ENCODE measurements at regions of chr1 and their contacts with region 1.

Region 1: DNA sequence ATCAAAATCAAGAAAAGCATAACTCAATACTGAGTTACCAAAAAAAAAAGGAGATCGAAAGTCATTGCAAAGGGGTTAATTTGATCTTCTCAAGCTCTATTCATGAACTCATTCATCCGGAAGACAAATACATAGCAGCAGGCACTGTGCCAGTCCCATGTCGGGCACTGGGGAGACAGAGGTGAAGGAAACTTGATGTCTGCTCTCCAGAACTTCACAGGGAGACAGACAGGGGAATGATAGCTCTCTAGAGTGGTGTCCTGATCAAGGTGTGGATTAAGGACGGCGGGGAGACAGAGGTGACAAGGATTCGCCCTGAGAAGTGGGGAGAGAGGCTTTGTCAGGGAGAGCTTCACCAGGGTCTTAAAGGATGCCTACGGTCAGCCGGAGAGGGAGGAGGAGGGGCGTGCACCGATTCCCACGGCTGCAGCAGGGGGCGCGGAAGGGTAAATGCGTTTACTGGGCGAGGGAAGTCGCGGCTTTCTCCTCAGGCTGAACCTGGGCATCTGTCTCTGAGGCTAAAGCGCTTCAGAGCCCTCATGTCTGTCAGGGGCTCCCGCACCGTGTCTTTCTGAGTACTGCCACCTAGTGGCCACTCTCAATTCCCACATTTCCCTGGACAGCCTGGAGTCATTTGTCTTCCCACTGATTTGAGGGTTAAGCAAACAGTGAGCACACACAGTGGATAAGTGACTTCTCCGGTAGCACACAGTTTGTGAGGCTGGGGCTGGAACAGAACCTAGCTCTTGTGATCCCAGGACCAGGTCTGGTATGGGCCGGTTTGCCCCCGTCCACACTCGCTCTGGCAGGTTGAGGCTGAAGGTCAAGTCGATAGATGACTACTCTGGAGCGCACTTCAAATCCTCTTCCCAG is 152.8 kb downstream of the TENT5C start:
- DNase-seq: peak; percentile 88

Region 2: DNA sequence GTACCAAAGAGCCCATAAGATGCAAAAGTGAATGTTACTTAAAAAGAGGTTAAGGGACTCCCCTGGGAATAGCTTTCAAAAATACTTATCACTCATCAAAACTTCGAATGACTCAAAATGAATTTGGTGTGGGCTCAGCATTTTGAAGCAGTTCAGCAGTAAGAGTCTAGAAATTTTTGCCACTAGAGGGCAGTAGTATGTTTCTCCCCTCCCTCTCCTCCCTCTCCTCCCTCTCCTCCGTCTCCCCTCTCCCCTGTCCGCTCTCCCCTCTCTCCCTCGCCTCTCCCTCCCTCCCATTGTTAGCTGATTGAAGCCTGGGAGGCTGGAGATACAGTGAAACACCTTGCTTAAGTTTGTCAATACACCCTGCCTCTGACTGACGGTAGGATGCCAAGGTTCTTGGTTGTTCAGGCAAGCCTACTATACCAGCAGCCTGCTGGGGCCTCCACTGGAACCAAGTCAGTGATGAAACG is 223.6 kb before region 1 on chr1:
- CTCF ChIA-PET with region 1: interaction called, 43 read pairs
- POLR2A ChIA-PET with region 1: no interaction called
- DNase-seq: peak; percentile 72

Region 3: GRCh38 chr1:117712621-117713020 is 46.1 kb before region 1 on chr1:
- CTCF ChIA-PET with region 1: interaction called, 12 read pairs
- POLR2A ChIA-PET with region 1: no interaction called
- DNase-seq: no peak

Region 4: DNA sequence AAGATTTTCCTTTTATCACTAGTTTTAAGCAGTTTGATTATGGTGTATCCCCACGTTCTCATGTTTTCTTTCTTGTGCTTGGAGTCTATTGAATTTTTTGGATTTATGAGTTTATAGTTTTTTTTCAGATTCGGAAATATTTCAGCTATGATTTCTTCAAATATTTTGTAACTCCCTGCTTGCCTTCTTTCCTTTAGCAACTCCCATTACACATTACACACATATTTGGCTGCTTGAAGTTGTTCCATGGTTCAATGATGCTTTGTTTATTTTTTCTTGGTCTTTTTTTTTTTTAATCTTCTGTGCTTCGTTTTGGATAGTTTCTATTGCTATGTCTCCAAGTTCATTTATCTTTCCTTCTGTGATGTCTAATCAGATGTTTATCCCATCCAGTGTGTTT is 1430.2 kb after region 1 on chr1:
- CTCF ChIA-PET with region 1: no interaction called
- POLR2A ChIA-PET with region 1: no interaction called
- DNase-seq: no peak

Measured in HEK293T (cell line).